B cell (primary cell): ENCODE measurements at regions of chr12 and their contacts with region 1.

Region 1: GRCh38 chr12:69470189-69471075 is at the start of gene FRS2:
- DNase-seq: peak; percentile 84
- ATAC-seq: peak; percentile 94
- H3K4me3 ChIP-seq: peak within 1 kb of the TSS; percentile 48 to 99 (median 96)
- H3K4me3 Mint-ChIP-seq: peak within 1 kb of the TSS; percentile 98
- H3K27ac ChIP-seq: peak within 1 kb of the TSS; percentile 78 to 94
- H3K27ac Mint-ChIP-seq: peak within 1 kb of the TSS; percentile 97
- H3K4me1 ChIP-seq: peaks cover 44 to 56% of the 10 kb centered on the region in 2 donors
- H3K4me1 Mint-ChIP-seq: peaks cover 70% of the 10 kb centered on the region
- H3K27me3 ChIP-seq: no peaks in the 10 kb centered on the region
- H3K27me3 Mint-ChIP-seq: no peaks in the 10 kb centered on the region
- CTCF ChIP-seq: no peak
- total RNA-seq, gene FRS2: 29.5 and 33.7 TPM in 2 replicates

Region 2: DNA sequence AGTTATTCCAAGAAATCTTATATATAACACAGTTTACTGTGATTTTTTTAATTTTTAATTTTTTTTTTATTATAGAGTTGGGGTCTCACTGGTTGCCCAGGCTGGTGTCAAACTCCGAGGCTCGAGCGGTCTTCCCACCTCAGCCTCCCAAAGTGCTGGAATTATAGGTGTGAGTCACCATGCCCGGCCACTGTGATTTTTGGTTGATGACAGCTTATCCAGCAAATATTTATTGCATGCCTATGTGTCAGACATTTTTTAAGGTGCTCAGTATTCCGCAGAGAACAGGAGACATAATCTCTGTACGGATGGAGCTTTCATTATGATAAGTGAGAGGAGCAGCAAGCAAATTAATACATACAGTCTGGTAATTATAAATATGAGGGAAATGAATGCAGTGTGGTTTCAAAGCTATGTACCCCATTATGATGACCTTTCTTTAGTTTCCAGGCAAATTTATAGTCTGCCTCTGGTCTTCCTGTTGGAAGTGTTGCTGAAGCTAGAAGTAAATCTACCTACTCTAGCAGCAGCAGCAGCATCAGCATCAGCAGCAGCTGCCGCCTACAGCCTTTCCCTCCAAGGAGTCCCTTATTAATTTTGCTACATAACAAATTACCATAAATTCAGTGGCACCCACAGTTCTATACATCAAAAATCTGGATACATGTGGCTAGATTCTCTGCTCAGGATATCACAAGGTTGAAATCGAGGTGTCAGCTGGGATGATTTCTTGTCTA is 32.1 kb after region 1 on chr12:
- CTCF ChIA-PET with region 1: no interaction called
- POLR2A ChIA-PET with region 1: no interaction called
- intact Hi-C with region 1: loop called (anchors 5 kb)
- DNase-seq: no peak
- ATAC-seq: no peak
- H3K4me3 ChIP-seq: no peak overlapping the region
- H3K4me3 Mint-ChIP-seq: no peak overlapping the region
- H3K27ac ChIP-seq: no peak overlapping the region
- H3K27ac Mint-ChIP-seq: no peak overlapping the region
- H3K4me1 ChIP-seq: peaks cover 27 to 28% of the 10 kb centered on the region in 2 donors
- H3K4me1 Mint-ChIP-seq: peaks cover 70% of the 10 kb centered on the region
- H3K27me3 ChIP-seq: no peaks in the 10 kb centered on the region
- H3K27me3 Mint-ChIP-seq: no peaks in the 10 kb centered on the region
- CTCF ChIP-seq: no peak

Region 3: DNA sequence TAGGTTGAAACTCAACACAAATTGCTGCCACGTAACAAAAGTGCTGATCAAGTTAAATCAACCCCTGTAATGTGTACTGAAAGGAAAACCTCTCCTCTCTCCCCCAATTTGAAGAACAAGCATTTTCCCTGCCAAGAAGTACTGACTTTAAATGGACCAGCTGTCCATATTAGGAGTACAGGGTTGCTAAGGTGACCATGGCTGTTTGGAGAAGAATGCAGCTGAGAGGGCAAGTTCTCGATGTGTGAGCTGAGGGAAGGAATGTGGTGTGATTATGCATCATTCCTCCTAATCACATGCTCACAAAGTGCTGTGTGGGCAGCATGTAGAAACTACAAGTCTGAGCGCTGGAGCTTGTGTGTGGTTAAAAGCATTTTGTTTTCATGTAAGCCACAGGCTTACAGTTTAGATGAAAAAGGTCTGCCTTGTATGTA is 64.0 kb after region 1 on chr12:
- CTCF ChIA-PET with region 1: no interaction called
- POLR2A ChIA-PET with region 1: no interaction called
- intact Hi-C with region 1: no loop called
- DNase-seq: no peak
- ATAC-seq: no peak
- H3K4me3 ChIP-seq: no peak overlapping the region
- H3K4me3 Mint-ChIP-seq: no peak overlapping the region
- H3K27ac ChIP-seq: no peak overlapping the region
- H3K27ac Mint-ChIP-seq: no peak overlapping the region
- H3K4me1 ChIP-seq: peaks cover 0 to 3% of the 10 kb centered on the region in 2 donors
- H3K4me1 Mint-ChIP-seq: peaks cover 4% of the 10 kb centered on the region
- H3K27me3 ChIP-seq: no peaks in the 10 kb centered on the region
- H3K27me3 Mint-ChIP-seq: no peaks in the 10 kb centered on the region
- CTCF ChIP-seq: no peak

Region 4: GRCh38 chr12:69585189-69586062 is 115.0 kb after region 1 on chr12 and contains the start of gene CCT2:
- CTCF ChIA-PET with region 1: interaction called, 3 read pairs
- POLR2A ChIA-PET with region 1: no interaction called
- intact Hi-C with region 1: loop called (anchors 1 kb)
- DNase-seq: peak; percentile 98
- ATAC-seq: peak; percentile 93
- H3K4me3 ChIP-seq: peak within 1 kb of the TSS; percentile 83 to 96 (median 90)
- H3K4me3 Mint-ChIP-seq: peak within 1 kb of the TSS; percentile 97
- H3K27ac ChIP-seq: peak within 1 kb of the TSS; percentile 91 to 97
- H3K27ac Mint-ChIP-seq: peak within 1 kb of the TSS; percentile 96
- H3K4me1 ChIP-seq: peaks cover 6 to 11% of the 10 kb centered on the region in 2 donors
- H3K4me1 Mint-ChIP-seq: peaks cover 12% of the 10 kb centered on the region
- H3K27me3 ChIP-seq: no peaks in the 10 kb centered on the region
- H3K27me3 Mint-ChIP-seq: no peaks in the 10 kb centered on the region
- CTCF ChIP-seq: peak; percentile 60
- total RNA-seq, gene CCT2: 125 TPM in 2 replicates